Activated CD4-positive, alpha-beta memory T cell treated with anti-CD3 and anti-CD28 coated beads for 36 hours (primary cell): ENCODE measurements at regions of chr3 and their contacts with region 1.

Region 1: GRCh38 chr3:5194341-5195159 is 7.0 kb downstream of the EDEM1 start:
- DNase-seq: peak; percentile 62
- H3K4me3 Mint-ChIP-seq: peak overlapping the region; percentile 66
- H3K27ac Mint-ChIP-seq: peak overlapping the region; percentile 98
- H3K4me1 Mint-ChIP-seq: peaks cover 85% of the 10 kb centered on the region
- H3K27me3 Mint-ChIP-seq: no peaks in the 10 kb centered on the region

Region 2: GRCh38 chr3:4406746-4407568 is 787.6 kb before region 1 on chr3:
- CTCF ChIA-PET with region 1: no interaction called
- POLR2A ChIA-PET with region 1: no interaction called
- intact Hi-C with region 1: loop called (anchors 5 kb)
- DNase-seq: no peak
- H3K4me3 Mint-ChIP-seq: no peak overlapping the region
- H3K27ac Mint-ChIP-seq: no peak overlapping the region
- H3K4me1 Mint-ChIP-seq: peaks cover 47% of the 10 kb centered on the region
- H3K27me3 Mint-ChIP-seq: no peaks in the 10 kb centered on the region

Region 3: GRCh38 chr3:4615750-4616149 is 578.8 kb before region 1 on chr3:
- CTCF ChIA-PET with region 1: no interaction called
- POLR2A ChIA-PET with region 1: no interaction called
- intact Hi-C with region 1: no loop called
- DNase-seq: no peak
- H3K4me3 Mint-ChIP-seq: no peak overlapping the region
- H3K27ac Mint-ChIP-seq: no peak overlapping the region
- H3K4me1 Mint-ChIP-seq: no peaks in the 10 kb centered on the region
- H3K27me3 Mint-ChIP-seq: no peaks in the 10 kb centered on the region

Region 4: DNA sequence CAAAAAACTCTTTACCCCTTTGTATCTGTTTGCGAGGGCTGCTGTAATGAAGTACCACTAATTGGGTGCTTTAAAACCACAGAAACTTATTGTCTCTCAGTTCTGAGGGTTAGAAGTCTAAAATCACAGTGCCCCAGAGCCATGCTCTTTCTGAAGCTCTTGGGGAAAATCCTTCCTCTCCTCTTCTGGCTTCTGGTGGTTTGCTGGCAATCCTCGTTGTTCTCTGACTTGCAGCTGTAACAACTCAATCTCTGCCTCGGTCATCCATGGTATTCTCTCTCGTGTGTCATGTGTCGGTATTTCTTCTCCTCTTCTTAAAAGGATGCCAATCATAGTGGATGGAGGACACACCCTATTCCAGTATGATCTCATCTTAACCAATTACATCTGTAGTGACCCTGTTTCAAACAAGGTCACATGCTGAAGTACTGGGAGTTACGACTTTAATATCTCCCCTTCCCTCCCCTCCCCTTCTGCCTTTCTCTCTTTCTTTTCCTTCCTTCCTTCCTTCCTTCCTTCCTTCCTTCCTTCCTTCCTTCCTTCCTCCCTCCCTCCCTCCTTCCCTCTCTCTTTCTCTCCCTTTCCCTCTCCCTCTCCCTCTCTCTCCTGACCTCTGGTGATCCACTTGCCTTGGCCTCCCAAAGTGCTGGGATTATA is 78.9 kb before region 1 on chr3:
- CTCF ChIA-PET with region 1: no interaction called
- POLR2A ChIA-PET with region 1: no interaction called
- intact Hi-C with region 1: no loop called
- DNase-seq: no peak
- H3K4me3 Mint-ChIP-seq: no peak overlapping the region
- H3K27ac Mint-ChIP-seq: no peak overlapping the region
- H3K4me1 Mint-ChIP-seq: peaks cover 2% of the 10 kb centered on the region
- H3K27me3 Mint-ChIP-seq: no peaks in the 10 kb centered on the region

Region 5: GRCh38 chr3:5136211-5136918 is 58.2 kb before region 1 on chr3:
- CTCF ChIA-PET with region 1: interaction called, 4 read pairs
- POLR2A ChIA-PET with region 1: interaction called, 5 read pairs
- intact Hi-C with region 1: loop called (anchors 1 kb)
- DNase-seq: peak; percentile 31
- H3K4me3 Mint-ChIP-seq: no peak overlapping the region
- H3K27ac Mint-ChIP-seq: peak overlapping the region; percentile 72
- H3K4me1 Mint-ChIP-seq: peaks cover 69% of the 10 kb centered on the region
- H3K27me3 Mint-ChIP-seq: no peaks in the 10 kb centered on the region

Region 6: GRCh38 chr3:5205165-5205941 is 10.8 kb after region 1 on chr3:
- CTCF ChIA-PET with region 1: interaction called, 3 read pairs
- POLR2A ChIA-PET with region 1: interaction called, 109 read pairs
- intact Hi-C with region 1: loop called (anchors 1 kb)
- DNase-seq: peak; percentile 74
- H3K4me3 Mint-ChIP-seq: no peak overlapping the region
- H3K27ac Mint-ChIP-seq: peak overlapping the region; percentile 89
- H3K4me1 Mint-ChIP-seq: peaks cover 43% of the 10 kb centered on the region
- H3K27me3 Mint-ChIP-seq: no peaks in the 10 kb centered on the region